Activated T-helper 1 cell treated with anti-CD3 and anti-CD28 coated beads, Interleukin-12 subunit alpha, Interleukin-12 subunit beta, Interleukin-2, Interleukin-4 antibody, amounts not matched to agents 30 ng/mL and 10 ng/mL and 1 ng/mL, durations not matched to agents 14 hours and 24 hours and 36 hours (primary cell): ENCODE measurements at regions of chr11 and their contacts with region 1.

Region 1: DNA sequence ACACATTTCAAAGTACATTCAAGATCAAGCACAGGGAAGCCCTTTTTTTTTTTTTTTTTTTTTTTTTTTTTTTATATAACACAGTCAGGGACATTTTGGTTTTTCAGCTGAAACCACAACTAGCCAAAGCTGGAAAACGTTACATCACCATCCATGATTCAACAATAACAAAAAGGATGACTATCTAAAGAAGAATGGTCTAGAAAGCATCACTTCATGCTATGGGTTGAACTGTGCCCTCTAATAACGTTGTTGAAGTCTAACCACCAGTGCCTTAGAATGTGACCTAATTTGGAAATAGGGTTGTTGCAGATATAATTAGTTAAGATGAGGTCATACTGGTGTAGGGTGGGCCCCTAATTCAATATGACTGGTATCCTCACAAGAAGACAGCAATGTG is 46.6 kb downstream of the MTMR2 start:
- DNase-seq: no peak
- H3K4me3 Mint-ChIP-seq: no peak overlapping the region
- H3K27ac Mint-ChIP-seq: no peak overlapping the region
- H3K4me1 Mint-ChIP-seq: peaks cover 5% of the 10 kb centered on the region
- H3K27me3 Mint-ChIP-seq: no peaks in the 10 kb centered on the region

Region 2: GRCh38 chr11:95849087-95849825 is 28.0 kb before region 1 on chr11:
- intact Hi-C with region 1: no loop called
- DNase-seq: no peak
- H3K4me3 Mint-ChIP-seq: no peak overlapping the region
- H3K27ac Mint-ChIP-seq: no peak overlapping the region
- H3K4me1 Mint-ChIP-seq: no peaks in the 10 kb centered on the region
- H3K27me3 Mint-ChIP-seq: no peaks in the 10 kb centered on the region

Region 3: DNA sequence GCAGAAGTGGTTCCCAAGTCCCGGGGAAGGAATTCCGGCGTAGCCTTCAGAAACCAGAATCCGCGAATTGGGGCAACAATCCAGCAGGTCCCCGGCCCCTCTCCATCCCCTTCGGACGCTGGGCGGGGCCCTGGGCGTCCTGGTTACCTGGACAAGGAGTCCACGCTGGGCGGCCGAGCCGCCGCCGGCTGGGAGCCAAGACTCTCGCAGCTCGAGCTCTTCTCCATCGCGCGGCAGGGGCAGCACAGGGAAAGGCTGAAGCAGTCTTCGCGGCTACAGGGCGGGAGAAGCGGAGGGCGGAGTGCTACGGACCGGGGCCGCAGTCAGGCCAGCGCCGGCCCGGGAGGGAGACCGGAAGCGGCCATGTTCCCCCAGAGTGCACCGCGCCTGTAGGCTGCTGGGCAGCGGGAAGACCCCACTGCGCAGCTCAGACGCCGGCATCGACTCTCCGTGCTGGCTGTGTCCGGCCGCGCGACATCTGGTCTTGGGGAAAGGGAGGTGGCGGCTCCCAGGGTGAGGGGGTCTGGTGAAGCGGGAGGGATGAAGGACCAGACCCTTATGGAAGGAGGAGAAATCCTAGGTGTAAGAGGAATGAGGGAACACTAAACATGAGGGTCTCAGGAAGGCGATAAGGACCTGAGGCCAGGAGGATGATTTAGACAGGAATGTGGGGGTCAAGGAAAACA is 46.6 kb after region 1 on chr11 and contains the start of gene MTMR2:
- intact Hi-C with region 1: loop called (anchors 5 kb)
- DNase-seq: peak; percentile 39
- H3K4me3 Mint-ChIP-seq: peak within 1 kb of the TSS; percentile 100
- H3K27ac Mint-ChIP-seq: peak within 1 kb of the TSS; percentile 86
- H3K4me1 Mint-ChIP-seq: peaks cover 31% of the 10 kb centered on the region
- H3K27me3 Mint-ChIP-seq: peaks cover 3% of the 10 kb centered on the region
- total RNA-seq, gene MTMR2: 41.3 and 41.7 TPM in 2 replicates

Region 4: DNA sequence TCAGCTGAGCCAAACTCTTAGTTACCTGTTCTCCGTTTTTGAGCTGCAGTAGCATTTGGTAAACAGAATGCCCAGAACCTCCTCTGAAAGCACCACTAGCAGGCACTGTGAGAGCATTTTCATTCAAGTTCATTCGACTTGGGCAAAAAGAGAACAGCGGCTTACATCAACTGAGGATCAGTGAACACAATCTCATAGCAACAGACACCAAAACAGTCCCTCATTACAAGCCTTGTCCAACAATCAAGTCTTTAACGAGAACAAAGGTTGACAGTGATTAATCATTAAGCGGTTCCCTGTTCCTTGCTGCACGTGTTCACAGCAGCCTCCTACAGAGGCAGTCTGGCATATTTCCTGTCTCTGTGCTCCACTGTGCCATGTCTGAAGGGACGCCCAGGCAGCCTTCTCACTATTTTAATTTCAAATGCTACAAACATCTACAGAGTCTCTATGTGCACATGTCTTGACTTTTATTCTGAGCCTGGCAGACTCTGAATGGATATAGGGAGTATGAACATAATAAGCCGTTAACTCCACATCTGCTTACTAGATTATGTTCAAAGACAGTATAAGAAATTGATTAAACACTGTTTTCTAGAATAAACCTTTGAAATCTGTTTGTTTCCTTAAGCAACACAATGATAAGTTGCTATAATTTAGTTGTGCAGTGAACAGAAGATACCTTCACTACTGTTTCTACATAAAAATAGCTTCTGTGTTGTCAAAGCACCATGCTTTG is 135.0 kb after region 1 on chr11:
- intact Hi-C with region 1: no loop called
- DNase-seq: peak; percentile 20
- H3K4me3 Mint-ChIP-seq: no peak overlapping the region
- H3K27ac Mint-ChIP-seq: peak overlapping the region; percentile 75
- H3K4me1 Mint-ChIP-seq: peaks cover 49% of the 10 kb centered on the region
- H3K27me3 Mint-ChIP-seq: no peaks in the 10 kb centered on the region

Region 5: GRCh38 chr11:96960476-96960875 is 1083.2 kb after region 1 on chr11:
- intact Hi-C with region 1: no loop called
- DNase-seq: no peak
- H3K4me3 Mint-ChIP-seq: no peak overlapping the region
- H3K27ac Mint-ChIP-seq: no peak overlapping the region
- H3K4me1 Mint-ChIP-seq: no peaks in the 10 kb centered on the region
- H3K27me3 Mint-ChIP-seq: no peaks in the 10 kb centered on the region